Posterior vena cava (tissue), 2 donors: ENCODE measurements at regions of chrX and their contacts with region 1.

Region 1: GRCh38 chrX:78659955-78660354 is 827 bp upstream of the RTL3 start:
- DNase-seq: no peak

Region 2: DNA sequence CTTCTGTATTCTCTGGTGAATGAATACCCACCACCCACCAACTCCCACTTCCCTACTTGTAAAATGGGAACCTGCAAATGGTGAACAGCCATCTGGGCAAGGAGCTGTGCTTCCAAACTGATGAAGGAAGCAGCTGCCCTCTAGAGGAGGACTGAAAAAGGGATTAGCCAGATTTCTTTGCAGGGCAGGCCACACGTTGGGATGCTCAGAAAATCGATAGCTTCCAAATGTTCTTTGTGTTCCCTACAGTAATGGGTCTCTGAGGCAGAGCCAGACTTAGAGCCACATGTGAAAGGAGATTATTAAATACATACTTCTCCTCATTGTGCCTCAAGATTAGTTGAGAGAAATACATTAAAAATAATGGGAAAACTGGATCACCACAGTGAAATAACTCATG is 48.3 kb after region 1 on chrX:
- intact Hi-C with region 1: loop called in 1 of 2 experiments (anchors 2 kb)
- DNase-seq: peak; percentile 28